ENCODE measurements at regions of chr20 and their contacts with region 1.

Region 1: GRCh38 chr20:50992733-50993457 is 30.0 kb downstream of the KCNG1 start:
- DNase-seq: peak; percentile 98
- ATAC-seq: peak; percentile 97
- H3K4me3 ChIP-seq: no peak overlapping the region
- H3K27ac ChIP-seq: no peak overlapping the region
- H3K4me1 ChIP-seq: peaks cover 18% of the 10 kb centered on the region
- H3K27me3 ChIP-seq: no peaks in the 10 kb centered on the region
- CTCF ChIP-seq: peak; percentile 99

Region 2: DNA sequence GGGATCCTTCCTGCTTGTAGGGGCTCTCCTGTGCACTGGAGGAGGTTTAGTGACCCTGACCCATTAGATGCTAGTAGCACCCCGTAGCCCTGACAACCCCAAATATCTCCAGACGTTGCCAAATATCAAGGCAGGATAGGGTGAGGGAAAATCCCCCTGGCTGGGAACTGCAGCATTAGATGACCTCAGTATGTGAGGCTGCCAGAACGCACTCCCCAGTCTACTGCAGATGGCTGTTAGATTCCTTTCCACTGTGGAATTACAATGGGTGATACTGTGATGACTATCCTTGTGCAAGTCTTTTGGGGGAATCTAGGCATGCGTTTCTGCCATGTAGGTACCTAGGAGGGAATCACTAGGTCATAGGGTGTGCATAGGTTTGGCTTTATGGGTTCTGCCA is 256.3 kb after region 1 on chr20:
- CTCF ChIA-PET with region 1: no interaction called
- POLR2A ChIA-PET with region 1: interaction called, 11 read pairs
- intact Hi-C with region 1: no loop called
- DNase-seq: no peak
- ATAC-seq: no peak
- H3K4me3 ChIP-seq: no peak overlapping the region
- H3K27ac ChIP-seq: no peak overlapping the region
- H3K4me1 ChIP-seq: no peaks in the 10 kb centered on the region
- H3K27me3 ChIP-seq: peaks cover 8% of the 10 kb centered on the region; the same call in 1 of the 2 replicates
- CTCF ChIP-seq: no peak